ENCODE measurements at regions of chr10 and their contacts with region 1.

Region 1: DNA sequence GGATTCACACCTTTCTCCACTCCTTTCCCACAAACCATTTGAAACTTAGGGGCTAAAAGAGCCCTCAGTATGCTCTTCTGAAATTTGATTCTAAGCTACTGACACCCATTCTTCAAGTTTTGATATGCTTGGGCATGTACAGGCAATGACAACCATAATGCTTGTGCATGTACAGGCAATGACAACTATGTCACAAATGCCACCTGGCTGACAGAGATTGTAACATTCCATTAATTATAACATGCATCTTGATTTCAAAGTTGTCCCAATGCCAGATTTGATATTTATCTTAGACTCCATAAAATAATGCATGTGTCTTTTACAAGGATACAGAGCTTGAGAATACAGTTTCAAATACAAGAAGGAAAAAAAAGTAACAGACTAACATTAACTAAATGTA is 17.5 kb upstream of the CDK1 start:
- DNase-seq: no peak
- H3K4me3 ChIP-seq: no peak overlapping the region
- H3K27ac ChIP-seq: no peak overlapping the region
- H3K4me1 ChIP-seq: no peaks in the 10 kb centered on the region
- H3K27me3 ChIP-seq: no peaks in the 10 kb centered on the region
- CTCF ChIP-seq: no peak

Region 2: DNA sequence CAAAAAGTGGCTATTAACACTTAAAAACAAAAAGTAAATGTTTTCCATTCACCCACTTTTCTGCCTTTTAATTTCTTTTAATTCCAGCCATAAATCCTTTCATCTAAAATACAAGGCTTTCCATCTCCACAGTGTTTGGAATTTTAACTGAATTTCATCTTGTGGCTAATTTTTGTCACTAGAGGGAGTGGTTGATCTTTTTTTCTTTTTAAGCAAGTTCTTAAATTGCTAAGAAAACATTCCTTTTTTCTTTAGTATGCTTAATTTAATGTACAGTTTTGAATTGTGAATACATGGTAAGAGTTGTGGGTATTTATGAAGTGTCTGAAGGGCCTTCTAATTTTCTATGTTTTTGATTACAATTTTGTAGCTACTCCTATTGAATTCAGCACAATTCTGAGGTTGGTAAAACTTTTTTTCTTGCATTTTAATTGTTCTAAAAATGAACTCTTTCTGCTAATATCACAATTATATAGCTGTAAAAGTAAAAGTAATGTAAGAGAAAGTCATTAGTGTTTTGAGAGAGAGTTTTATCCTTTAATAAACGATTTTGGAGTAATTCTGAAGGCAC is 316.2 kb before region 1 on chr10:
- intact Hi-C with region 1: loop called (anchors 10 kb)
- DNase-seq: no peak
- H3K4me3 ChIP-seq: no peak overlapping the region
- H3K27ac ChIP-seq: no peak overlapping the region
- H3K4me1 ChIP-seq: no peaks in the 10 kb centered on the region
- H3K27me3 ChIP-seq: no peaks in the 10 kb centered on the region
- CTCF ChIP-seq: peak; percentile 34

Region 3: DNA sequence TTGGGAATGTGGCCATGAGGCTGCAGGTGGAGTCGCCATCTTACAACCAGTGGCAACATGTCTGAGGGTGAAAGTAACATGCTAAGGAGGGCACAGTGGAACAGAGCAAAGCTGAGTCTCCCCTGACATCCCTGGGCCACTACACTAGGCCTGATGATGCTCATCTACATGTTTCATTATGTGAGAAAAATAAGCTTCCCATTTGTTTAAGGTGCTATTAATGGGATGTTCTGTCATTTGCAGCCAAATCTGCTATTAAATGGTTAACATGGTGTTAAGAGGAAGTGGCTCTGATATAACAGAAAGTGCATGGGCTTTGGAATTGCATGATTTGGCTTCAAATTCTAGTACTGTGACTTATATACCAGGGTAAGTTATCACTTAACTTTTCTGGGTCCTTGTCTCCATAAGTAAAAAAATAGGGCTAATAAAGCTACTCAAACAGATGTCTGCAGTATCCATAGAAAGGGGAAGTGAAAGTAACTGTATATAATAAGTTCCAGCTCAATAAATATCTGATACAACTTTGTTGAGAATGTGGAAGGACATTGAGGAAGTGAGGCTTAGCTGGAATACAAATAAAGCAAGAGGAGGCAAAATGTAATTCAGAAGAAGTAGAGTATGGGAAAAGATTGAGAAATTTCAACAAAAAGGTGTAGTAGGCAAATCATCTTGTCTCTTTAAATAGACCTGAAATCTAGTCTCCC is 1349.0 kb after region 1 on chr10:
- intact Hi-C with region 1: no loop called
- DNase-seq: no peak
- H3K4me3 ChIP-seq: no peak overlapping the region
- H3K27ac ChIP-seq: no peak overlapping the region
- H3K4me1 ChIP-seq: no peaks in the 10 kb centered on the region
- H3K27me3 ChIP-seq: no peaks in the 10 kb centered on the region
- CTCF ChIP-seq: no peak